Activated CD4-positive, alpha-beta memory T cell treated with anti-CD3 and anti-CD28 coated beads for 36 hours (primary cell): ENCODE measurements at regions of chr6 and their contacts with region 1.

Region 1: DNA sequence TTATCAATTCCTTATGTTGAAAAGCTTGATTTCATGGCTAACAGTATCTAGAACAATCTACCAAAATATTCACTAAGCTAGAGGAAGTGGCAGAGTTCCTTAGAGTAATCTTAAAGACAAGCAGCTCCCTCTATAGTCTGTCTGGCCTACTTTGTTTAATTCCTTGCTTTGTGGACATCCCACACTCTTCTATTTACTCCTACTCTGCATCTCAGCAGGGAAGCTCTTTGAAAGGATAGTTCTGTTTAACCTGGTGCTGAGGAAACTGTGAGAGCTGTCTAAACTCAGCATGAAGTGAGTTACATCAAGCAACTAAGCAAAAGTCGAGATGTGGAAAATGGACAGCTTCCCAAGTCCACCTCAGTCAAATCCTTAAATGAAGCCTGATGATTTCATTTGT is 4.3 kb downstream of the REV3L start:
- DNase-seq: no peak
- H3K4me3 Mint-ChIP-seq: no peak overlapping the region
- H3K27ac Mint-ChIP-seq: no peak overlapping the region
- H3K4me1 Mint-ChIP-seq: peaks cover 40% of the 10 kb centered on the region
- H3K27me3 Mint-ChIP-seq: no peaks in the 10 kb centered on the region

Region 2: DNA sequence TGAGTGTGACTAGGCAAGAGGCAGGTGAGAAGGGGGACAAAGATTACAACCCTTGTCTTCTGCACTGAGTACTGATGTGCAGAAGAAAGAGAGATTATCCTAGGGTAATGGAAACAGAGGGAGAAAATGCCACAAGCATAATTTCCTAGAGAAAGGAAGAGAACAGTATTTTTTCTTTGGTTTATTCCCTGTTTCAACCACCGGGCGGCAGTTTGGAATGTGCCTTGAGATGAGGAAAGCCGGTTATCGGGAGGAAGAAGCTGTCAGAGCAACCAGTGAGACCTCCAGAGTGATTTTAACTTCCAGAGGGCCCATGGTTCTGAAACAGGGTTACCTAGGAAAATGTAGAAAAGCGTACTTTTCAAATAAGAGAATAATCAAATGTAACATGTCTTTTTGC is 117.1 kb before region 1 on chr6:
- CTCF ChIA-PET with region 1: interaction called, 5 read pairs
- POLR2A ChIA-PET with region 1: no interaction called
- intact Hi-C with region 1: loop called (anchors 10 kb)
- DNase-seq: no peak
- H3K4me3 Mint-ChIP-seq: no peak overlapping the region
- H3K27ac Mint-ChIP-seq: no peak overlapping the region
- H3K4me1 Mint-ChIP-seq: no peaks in the 10 kb centered on the region
- H3K27me3 Mint-ChIP-seq: no peaks in the 10 kb centered on the region

Region 3: DNA sequence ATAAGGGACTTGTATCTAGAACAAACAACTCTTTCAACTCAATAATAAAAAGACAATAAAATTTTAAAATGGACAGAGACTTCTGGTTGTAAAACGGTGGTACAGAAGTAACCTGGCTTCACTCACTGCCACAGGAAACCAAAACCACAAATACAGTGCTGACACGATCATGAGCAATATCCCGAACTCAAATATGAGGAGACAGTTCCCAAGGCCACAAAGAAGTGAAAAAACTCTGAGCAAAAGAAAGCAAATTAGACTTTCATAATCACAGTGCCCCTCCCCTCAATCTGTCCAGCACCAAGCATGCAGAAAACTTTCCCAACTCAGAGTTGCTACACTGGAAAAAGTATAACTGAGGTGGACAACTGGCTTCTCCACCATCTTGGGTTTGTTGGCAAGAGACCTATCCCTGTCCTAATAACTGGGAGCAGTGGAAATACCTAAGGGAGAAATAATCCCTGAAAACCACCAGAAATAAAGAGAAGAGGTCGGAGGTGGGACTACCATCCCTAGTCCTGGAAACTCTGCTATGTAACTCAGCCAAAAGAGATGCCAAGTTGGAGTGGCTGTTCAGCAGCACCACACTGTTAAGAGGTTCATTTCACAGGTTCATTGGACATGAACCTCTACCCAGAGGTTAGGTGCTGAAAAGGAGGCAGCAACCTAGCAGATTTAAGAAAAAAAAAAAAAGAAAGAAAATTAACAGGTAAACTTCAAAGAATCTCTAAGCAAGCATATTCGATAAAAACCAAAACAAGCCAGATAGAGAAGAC is 51.2 kb before region 1 on chr6:
- CTCF ChIA-PET with region 1: no interaction called
- POLR2A ChIA-PET with region 1: no interaction called
- intact Hi-C with region 1: loop called (anchors 5 kb)
- DNase-seq: peak; percentile 44
- H3K4me3 Mint-ChIP-seq: no peak overlapping the region
- H3K27ac Mint-ChIP-seq: peak overlapping the region; percentile 10
- H3K4me1 Mint-ChIP-seq: peaks cover 51% of the 10 kb centered on the region
- H3K27me3 Mint-ChIP-seq: no peaks in the 10 kb centered on the region

Region 4: DNA sequence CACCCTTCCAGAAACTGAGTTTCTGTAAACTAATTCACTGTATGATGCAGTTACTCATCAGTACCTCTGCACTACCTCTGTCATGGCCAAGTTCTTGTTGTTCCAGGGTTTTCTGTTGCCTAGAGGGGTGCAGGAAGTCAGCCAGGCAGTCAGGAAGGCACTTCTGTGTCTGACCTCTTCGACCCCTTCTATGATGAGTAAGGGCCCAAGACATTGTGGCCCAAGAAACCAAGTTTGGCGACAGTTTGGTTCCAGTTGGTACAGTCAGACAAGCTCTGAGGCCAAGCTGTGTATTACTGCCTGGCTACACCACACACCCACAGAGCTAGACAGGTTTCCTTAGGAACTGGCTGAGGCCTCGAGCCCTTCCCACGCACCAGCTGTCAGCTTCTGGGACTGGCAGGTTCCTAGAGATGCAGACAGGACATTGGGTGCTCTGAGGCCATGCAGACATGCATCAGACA is 85.8 kb after region 1 on chr6:
- CTCF ChIA-PET with region 1: no interaction called
- POLR2A ChIA-PET with region 1: no interaction called
- intact Hi-C with region 1: no loop called
- DNase-seq: peak; percentile 50
- H3K4me3 Mint-ChIP-seq: no peak overlapping the region
- H3K27ac Mint-ChIP-seq: no peak overlapping the region
- H3K4me1 Mint-ChIP-seq: peaks cover 53% of the 10 kb centered on the region
- H3K27me3 Mint-ChIP-seq: no peaks in the 10 kb centered on the region

Region 5: GRCh38 chr6:111642463-111643158 is 163.9 kb after region 1 on chr6:
- CTCF ChIA-PET with region 1: no interaction called
- POLR2A ChIA-PET with region 1: no interaction called
- intact Hi-C with region 1: loop called (anchors 2 kb)
- DNase-seq: peak; percentile 66
- H3K4me3 Mint-ChIP-seq: no peak overlapping the region
- H3K27ac Mint-ChIP-seq: no peak overlapping the region
- H3K4me1 Mint-ChIP-seq: no peaks in the 10 kb centered on the region
- H3K27me3 Mint-ChIP-seq: no peaks in the 10 kb centered on the region

Region 6: DNA sequence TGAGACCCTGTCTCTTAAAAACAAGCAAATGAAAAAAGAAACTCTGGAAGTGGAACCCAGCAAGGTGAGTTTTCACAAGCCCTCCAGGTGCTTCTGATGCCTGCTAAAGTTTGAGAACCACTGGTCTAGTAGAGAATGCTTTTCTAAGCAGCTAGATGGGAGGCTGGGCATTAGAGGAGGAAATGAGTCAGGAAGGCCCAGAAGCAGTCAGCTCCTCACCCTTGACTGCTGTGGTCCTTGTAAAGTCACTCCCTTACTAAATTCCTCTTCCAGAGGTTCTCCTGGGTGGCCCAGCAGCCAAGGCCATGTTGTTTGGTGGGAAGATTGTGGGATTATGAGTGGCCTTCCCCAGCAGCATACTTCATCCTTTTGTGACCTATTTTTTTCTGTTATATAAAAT is 446.5 kb after region 1 on chr6:
- CTCF ChIA-PET with region 1: no interaction called
- POLR2A ChIA-PET with region 1: no interaction called
- intact Hi-C with region 1: no loop called
- DNase-seq: peak; percentile 33
- H3K4me3 Mint-ChIP-seq: no peak overlapping the region
- H3K27ac Mint-ChIP-seq: no peak overlapping the region
- H3K4me1 Mint-ChIP-seq: peaks cover 25% of the 10 kb centered on the region
- H3K27me3 Mint-ChIP-seq: no peaks in the 10 kb centered on the region